ENCODE measurements at regions of chr14 and their contacts with region 1.

Region 1: GRCh38 chr14:65958664-65959562 is 527.3 kb upstream of the CCDC196 start:
- DNase-seq: peak in 4 of 5 donors; percentile 30 to 47 (median 45)
- H3K4me3 ChIP-seq: no peak overlapping the region
- H3K4me3 Mint-ChIP-seq: no peak overlapping the region
- H3K27ac ChIP-seq: no peak overlapping the region
- H3K27ac Mint-ChIP-seq: no peak overlapping the region
- H3K4me1 ChIP-seq: peaks cover 23% of the 10 kb centered on the region
- H3K4me1 Mint-ChIP-seq: peaks cover 18 to 32% (median 24%) of the 10 kb centered on the region in 4 donors
- H3K27me3 ChIP-seq: no peaks in the 10 kb centered on the region
- H3K27me3 Mint-ChIP-seq: no peaks in the 10 kb centered on the region

Region 2: GRCh38 chr14:64914237-64914971 is 1044.5 kb before region 1 on chr14 and contains the start of gene CHURC1:
- CTCF ChIA-PET with region 1: no interaction called
- POLR2A ChIA-PET with region 1: no interaction called
- intact Hi-C with region 1: no loop called
- DNase-seq: peak; percentile 94 to 99 (median 97)
- H3K4me3 ChIP-seq: peak within 1 kb of the TSS; percentile 90 to 99
- H3K4me3 Mint-ChIP-seq: peak within 1 kb of the TSS; percentile 84 to 95 (median 90)
- H3K27ac ChIP-seq: peak within 1 kb of the TSS; percentile 100
- H3K27ac Mint-ChIP-seq: peak within 1 kb of the TSS; percentile 92 to 99 (median 98)
- H3K4me1 ChIP-seq: peaks cover 46% of the 10 kb centered on the region
- H3K4me1 Mint-ChIP-seq: peaks cover 33 to 56% (median 45%) of the 10 kb centered on the region in 4 donors
- H3K27me3 ChIP-seq: no peaks in the 10 kb centered on the region
- H3K27me3 Mint-ChIP-seq: peaks cover 0 to 1% of the 10 kb centered on the region in 2 donors
- total RNA-seq, gene CHURC1: 112 to 116 TPM

Region 3: DNA sequence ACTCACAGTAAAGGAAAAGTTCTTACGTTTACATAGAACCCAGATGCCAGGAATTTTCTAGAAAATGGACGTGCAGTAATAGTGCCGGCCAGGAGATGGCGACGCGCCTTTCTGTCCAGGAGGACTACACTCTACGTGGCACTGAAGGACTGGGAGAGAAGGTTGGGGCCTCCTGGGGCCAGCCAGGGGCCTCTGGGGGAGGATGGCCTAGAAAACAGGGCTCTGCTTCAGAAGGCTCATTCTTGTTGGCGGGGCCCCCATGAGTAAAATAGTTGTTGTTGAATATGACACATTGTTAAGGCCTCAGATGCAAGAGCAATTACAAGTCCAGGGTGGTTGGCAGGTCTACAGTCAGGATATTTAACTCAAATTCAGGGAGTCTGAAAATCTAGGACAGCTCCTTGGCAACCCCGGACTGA is 736.5 kb before region 1 on chr14:
- CTCF ChIA-PET with region 1: interaction called, 5 read pairs
- POLR2A ChIA-PET with region 1: no interaction called
- intact Hi-C with region 1: loop called (anchors 2 kb)
- DNase-seq: peak; percentile 45 to 55 (median 48)
- H3K4me3 ChIP-seq: no peak overlapping the region
- H3K4me3 Mint-ChIP-seq: peak overlapping the region in 1 of 8 donors; percentile 64
- H3K27ac ChIP-seq: no peak overlapping the region
- H3K27ac Mint-ChIP-seq: peak overlapping the region; percentile 0 to 83 (median 42)
- H3K4me1 ChIP-seq: peaks cover 34% of the 10 kb centered on the region
- H3K4me1 Mint-ChIP-seq: peaks cover 23 to 59% (median 38%) of the 10 kb centered on the region in 4 donors
- H3K27me3 ChIP-seq: no peaks in the 10 kb centered on the region
- H3K27me3 Mint-ChIP-seq: no peaks in the 10 kb centered on the region

Region 4: DNA sequence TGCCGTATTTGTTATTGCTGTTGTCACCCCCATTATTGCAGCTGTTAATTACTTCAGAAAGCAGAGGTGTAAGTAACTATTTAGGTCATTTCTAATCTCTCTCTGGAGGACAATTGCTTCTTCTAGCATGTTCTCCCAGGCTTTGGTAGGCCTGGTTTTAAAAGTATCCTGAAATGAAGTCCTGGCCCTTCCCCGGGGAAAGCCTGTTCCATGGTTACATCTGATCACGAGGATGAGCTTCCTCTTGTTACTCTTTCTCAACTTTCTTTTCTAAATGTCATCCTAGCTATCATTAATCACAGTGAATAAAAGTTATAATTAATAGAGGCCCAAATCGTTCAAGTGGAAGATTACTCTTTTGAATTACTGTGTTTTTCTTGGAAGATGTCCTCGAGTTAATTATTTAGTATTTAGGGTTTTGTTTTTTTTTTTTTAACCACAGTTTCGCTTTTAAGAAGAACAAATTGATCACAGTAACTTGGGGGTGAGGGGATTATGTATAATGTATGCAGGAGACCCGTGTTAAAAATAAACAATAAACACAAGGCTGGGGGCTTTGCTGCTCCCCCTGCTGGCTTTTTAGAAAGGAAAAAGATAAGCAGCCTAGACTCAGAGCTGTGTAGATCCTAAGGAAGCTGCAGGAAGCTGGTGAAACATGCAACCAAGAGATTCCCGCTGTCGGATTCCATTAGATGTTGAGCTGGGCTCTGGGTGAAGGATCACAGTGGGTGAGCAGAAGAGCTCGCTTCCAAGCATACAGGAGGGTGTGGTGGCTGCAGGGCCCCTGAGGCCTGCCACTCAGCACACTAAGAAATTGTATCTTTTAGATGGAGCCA is 126.3 kb before region 1 on chr14:
- CTCF ChIA-PET with region 1: interaction called, 182 read pairs
- POLR2A ChIA-PET with region 1: no interaction called
- intact Hi-C with region 1: no loop called
- DNase-seq: no peak
- H3K4me3 ChIP-seq: no peak overlapping the region
- H3K4me3 Mint-ChIP-seq: no peak overlapping the region
- H3K27ac ChIP-seq: no peak overlapping the region
- H3K27ac Mint-ChIP-seq: peak overlapping the region in 1 of 7 donors; percentile 41
- H3K4me1 ChIP-seq: peaks cover 16% of the 10 kb centered on the region
- H3K4me1 Mint-ChIP-seq: peaks cover 27 to 37% (median 30%) of the 10 kb centered on the region in 4 donors
- H3K27me3 ChIP-seq: no peaks in the 10 kb centered on the region
- H3K27me3 Mint-ChIP-seq: no peaks in the 10 kb centered on the region

Region 5: GRCh38 chr14:65853407-65853955 is 105.4 kb before region 1 on chr14:
- CTCF ChIA-PET with region 1: interaction called, 27 read pairs
- POLR2A ChIA-PET with region 1: interaction called, 7 read pairs
- intact Hi-C with region 1: no loop called
- DNase-seq: no peak
- H3K4me3 ChIP-seq: no peak overlapping the region
- H3K4me3 Mint-ChIP-seq: no peak overlapping the region
- H3K27ac ChIP-seq: no peak overlapping the region
- H3K27ac Mint-ChIP-seq: peak overlapping the region in 1 of 7 donors; percentile 36
- H3K4me1 ChIP-seq: peaks cover 49% of the 10 kb centered on the region
- H3K4me1 Mint-ChIP-seq: peaks cover 37 to 53% (median 43%) of the 10 kb centered on the region in 4 donors
- H3K27me3 ChIP-seq: no peaks in the 10 kb centered on the region
- H3K27me3 Mint-ChIP-seq: no peaks in the 10 kb centered on the region

Region 6: DNA sequence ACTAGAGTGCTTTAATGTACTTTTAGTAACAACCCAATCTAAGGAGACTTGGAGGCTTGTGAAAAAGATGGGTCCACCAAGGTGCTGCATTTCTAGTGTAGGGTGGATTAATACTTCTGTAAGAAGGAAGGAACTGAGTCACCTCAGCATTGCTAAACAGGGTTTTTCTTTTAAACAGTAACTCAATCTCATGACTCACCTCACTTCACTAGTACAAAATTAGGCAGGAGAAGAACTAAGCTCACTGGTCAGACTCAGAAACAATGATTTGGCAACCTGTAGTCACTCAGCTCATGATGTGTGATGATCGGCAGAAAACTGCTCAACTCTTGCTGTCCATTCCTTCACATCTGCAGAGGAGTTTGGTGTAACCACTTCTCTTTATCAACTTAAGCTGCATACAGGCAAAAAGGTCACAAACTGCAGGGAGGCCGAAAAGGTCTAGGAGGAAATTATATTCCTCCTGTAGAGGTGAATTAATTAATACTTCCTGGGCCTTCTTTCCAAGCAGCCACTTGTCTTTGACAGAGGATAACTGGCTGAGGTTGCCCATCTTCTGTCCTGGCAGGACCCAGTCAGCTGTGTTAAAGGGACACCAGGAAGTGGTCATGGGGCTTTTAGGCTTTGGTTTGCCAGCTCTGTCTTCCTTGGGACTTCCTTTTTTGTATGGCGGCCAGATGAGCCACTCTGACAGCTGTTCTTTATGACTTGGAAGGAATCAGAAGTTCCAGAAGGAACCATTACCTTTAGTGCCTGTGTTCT is 79.5 kb before region 1 on chr14:
- CTCF ChIA-PET with region 1: interaction called, 19 read pairs
- POLR2A ChIA-PET with region 1: no interaction called
- intact Hi-C with region 1: no loop called
- DNase-seq: no peak
- H3K4me3 ChIP-seq: no peak overlapping the region
- H3K4me3 Mint-ChIP-seq: no peak overlapping the region
- H3K27ac ChIP-seq: no peak overlapping the region
- H3K27ac Mint-ChIP-seq: peak overlapping the region in 5 of 7 donors; percentile 9 to 82 (median 16)
- H3K4me1 ChIP-seq: peaks cover 47% of the 10 kb centered on the region
- H3K4me1 Mint-ChIP-seq: peaks cover 19 to 34% (median 30%) of the 10 kb centered on the region in 4 donors
- H3K27me3 ChIP-seq: no peaks in the 10 kb centered on the region
- H3K27me3 Mint-ChIP-seq: no peaks in the 10 kb centered on the region

Region 7: DNA sequence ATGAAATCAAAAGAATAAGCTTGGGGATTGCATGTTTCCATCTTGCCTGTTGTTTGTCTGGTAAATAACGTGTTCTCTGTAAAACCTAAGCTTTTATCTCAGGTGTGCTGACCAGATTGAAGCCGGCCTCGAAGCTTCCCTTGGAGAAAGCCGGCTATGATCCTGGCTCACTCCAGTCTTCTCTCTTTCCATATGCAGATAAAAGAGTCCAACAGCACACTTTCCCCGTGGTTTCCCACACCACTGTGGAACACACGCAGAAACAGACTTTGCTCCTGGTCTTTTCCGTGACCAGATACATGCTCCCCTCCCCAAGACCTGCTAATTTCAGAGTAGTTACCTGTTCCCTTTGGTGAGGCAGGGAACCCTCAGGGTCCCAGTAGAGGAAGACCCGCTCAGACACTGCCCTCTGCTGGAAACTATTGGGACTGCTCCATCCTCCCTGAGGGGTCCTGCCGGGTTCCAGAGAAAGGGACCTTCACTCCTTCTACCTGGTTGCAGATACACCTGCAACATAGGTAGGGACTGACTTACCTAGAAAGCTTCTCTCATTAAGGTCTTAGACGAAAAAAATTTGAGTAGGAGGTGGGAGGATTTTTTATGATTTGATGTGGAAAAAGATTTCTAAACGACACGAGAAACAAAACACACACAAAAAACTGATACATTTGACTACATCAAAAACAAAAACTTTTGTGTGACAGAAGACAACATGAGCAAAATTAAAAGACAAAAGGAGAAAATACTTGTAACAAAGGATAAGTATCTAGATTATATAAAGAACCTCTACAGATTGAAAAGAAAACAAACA is 111.8 kb after region 1 on chr14:
- CTCF ChIA-PET with region 1: interaction called, 35 read pairs
- POLR2A ChIA-PET with region 1: no interaction called
- intact Hi-C with region 1: no loop called
- DNase-seq: peak; percentile 52 to 70 (median 53)
- H3K4me3 ChIP-seq: no peak overlapping the region
- H3K4me3 Mint-ChIP-seq: peak overlapping the region in 1 of 8 donors; percentile 27
- H3K27ac ChIP-seq: no peak overlapping the region
- H3K27ac Mint-ChIP-seq: peak overlapping the region in 3 of 7 donors; percentile 36 to 54 (median 37)
- H3K4me1 ChIP-seq: no peaks in the 10 kb centered on the region
- H3K4me1 Mint-ChIP-seq: peaks cover 3 to 6% (median 6%) of the 10 kb centered on the region in 4 donors
- H3K27me3 ChIP-seq: no peaks in the 10 kb centered on the region
- H3K27me3 Mint-ChIP-seq: peaks cover 0 to 4% of the 10 kb centered on the region in 2 donors